ENCODE measurements at regions of chr11 and their contacts with region 1.

Region 1: GRCh38 chr11:81829976-81830375 is 903.7 kb downstream of the FAM181B start:
- DNase-seq: no peak
- H3K4me3 ChIP-seq: no peak overlapping the region
- H3K4me3 Mint-ChIP-seq: no peak overlapping the region
- H3K27ac ChIP-seq: no peak overlapping the region
- H3K27ac Mint-ChIP-seq: no peak overlapping the region
- H3K4me1 ChIP-seq: no peaks in the 10 kb centered on the region
- H3K4me1 Mint-ChIP-seq: no peaks in the 10 kb centered on the region
- H3K27me3 ChIP-seq: no peaks in the 10 kb centered on the region
- H3K27me3 Mint-ChIP-seq: peaks cover 0 to 1% (median 1%) of the 10 kb centered on the region in 3 donors
- CTCF ChIP-seq: no peak

Region 2: DNA sequence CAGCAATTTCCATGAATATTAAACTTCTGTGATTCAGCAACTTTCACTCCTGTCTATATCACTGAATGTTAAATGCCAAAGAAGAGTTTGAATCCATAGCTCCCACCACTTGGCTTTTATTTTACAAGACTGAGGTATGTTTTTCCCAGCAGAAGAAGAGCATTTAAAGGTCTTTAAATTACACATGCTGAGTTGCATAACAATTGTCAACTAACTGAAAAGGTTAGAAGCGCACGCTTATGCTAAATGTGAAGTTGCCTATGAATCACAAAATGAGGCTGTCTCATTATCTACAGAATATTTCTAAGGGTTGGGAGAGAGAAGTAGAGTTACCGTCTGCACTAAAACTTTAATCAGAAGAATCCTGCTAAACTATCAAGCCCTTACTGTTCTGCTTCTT is 182.6 kb before region 1 on chr11:
- intact Hi-C with region 1: no loop called
- DNase-seq: no peak
- H3K4me3 ChIP-seq: no peak overlapping the region
- H3K4me3 Mint-ChIP-seq: no peak overlapping the region
- H3K27ac ChIP-seq: no peak overlapping the region
- H3K27ac Mint-ChIP-seq: no peak overlapping the region
- H3K4me1 ChIP-seq: no peaks in the 10 kb centered on the region
- H3K4me1 Mint-ChIP-seq: no peaks in the 10 kb centered on the region
- H3K27me3 ChIP-seq: peaks cover 2 to 9% of the 10 kb centered on the region in 2 donors
- H3K27me3 Mint-ChIP-seq: peaks cover 5 to 9% (median 9%) of the 10 kb centered on the region in 3 donors
- CTCF ChIP-seq: no peak

Region 3: DNA sequence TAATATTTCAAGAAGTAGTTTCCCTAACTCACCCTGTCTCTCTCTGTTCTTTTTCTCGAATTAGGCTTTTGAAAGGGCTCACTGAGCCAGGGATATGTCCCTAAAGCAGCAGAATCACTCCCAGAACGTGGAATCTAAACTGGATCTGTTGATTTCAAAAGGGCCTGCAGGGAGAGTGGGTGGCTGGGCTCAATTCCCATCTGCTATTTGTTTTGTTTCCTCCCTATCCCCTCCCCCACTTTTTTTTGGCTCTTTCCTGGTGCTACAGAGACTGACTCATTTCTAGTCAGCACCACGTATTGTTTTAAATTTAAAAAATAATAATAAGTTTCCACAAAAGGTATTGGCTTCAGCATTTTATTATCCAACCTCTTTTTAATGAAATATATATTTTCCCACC is 57.8 kb before region 1 on chr11:
- intact Hi-C with region 1: loop called in 1 of 2 experiments (anchors 10 kb)
- DNase-seq: no peak
- H3K4me3 ChIP-seq: no peak overlapping the region
- H3K4me3 Mint-ChIP-seq: no peak overlapping the region
- H3K27ac ChIP-seq: no peak overlapping the region
- H3K27ac Mint-ChIP-seq: no peak overlapping the region
- H3K4me1 ChIP-seq: no peaks in the 10 kb centered on the region
- H3K4me1 Mint-ChIP-seq: no peaks in the 10 kb centered on the region
- H3K27me3 ChIP-seq: no peaks in the 10 kb centered on the region
- H3K27me3 Mint-ChIP-seq: no peaks in the 10 kb centered on the region
- CTCF ChIP-seq: no peak

Region 4: GRCh38 chr11:81932303-81932702 is 102.3 kb after region 1 on chr11:
- intact Hi-C with region 1: no loop called
- DNase-seq: no peak
- H3K4me3 ChIP-seq: no peak overlapping the region
- H3K4me3 Mint-ChIP-seq: no peak overlapping the region
- H3K27ac ChIP-seq: no peak overlapping the region
- H3K27ac Mint-ChIP-seq: no peak overlapping the region
- H3K4me1 ChIP-seq: no peaks in the 10 kb centered on the region
- H3K4me1 Mint-ChIP-seq: no peaks in the 10 kb centered on the region
- H3K27me3 ChIP-seq: no peaks in the 10 kb centered on the region
- H3K27me3 Mint-ChIP-seq: no peaks in the 10 kb centered on the region
- CTCF ChIP-seq: no peak

Measured in CD14-positive monocyte (primary cell).